Posterior cingulate gyrus (tissue), 11 donors: ENCODE measurements at regions of chr21 and their contacts with region 1.

Region 1: DNA sequence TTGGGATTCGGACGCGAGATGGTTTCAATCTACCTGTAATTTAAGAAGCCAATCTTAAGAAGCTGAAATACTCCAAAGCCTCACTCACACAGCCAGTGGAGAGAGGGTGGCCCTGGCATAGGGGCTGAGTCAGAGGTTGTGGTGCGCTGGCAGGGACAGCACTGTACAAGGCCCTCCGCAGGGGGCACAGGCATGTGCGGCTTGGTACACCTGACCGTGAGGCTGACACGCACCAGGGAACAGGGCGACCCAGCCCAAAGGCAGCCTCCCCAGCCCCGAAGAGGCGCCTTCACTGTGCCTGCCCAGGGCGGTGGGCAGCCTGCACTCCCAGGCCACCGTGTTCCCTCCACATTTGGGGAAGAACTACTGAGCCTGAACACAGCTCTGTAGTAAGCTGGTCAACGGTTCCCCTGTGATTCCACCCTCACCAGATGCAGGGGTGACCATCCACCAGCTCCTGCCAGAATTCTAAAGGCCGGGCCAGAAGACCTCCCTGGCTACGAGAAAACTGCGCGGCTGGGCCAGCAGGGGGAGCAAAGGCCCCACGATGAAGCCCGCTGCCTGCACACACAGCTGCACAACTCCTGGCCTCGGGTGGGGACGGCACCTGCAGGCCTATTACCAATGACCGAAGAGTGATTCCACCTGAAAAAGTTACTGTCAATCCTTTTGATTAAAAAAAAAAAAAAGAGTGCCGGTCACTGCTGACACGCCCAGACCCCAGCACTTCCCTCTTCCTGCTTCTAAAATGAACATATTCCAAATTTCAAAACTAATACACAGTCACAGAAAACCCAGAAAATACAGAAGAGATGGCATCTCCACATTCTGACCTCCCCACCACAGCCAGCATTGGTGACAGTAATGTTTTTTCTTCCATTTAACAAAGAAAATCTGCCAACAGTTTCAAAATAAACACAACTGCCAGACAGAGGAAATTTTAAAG is 49.6 kb upstream of the RIPK4 start:
- DNase-seq: peak in 9 of 10 donors; percentile 52 to 95 (median 68)

Region 2: GRCh38 chr21:41684381-41685245 is 131.9 kb before region 1 on chr21:
- intact Hi-C with region 1: no loop called
- DNase-seq: peak in 2 of 10 donors; percentile 35 to 52

Region 3: GRCh38 chr21:42117229-42117966 is 300.9 kb after region 1 on chr21:
- intact Hi-C with region 1: loop called (anchors 1 kb)
- DNase-seq: peak; percentile 68 to 96 (median 88)